B cell (primary cell): ENCODE measurements at regions of chr2 and their contacts with region 1.

Region 1: GRCh38 chr2:44167940-44168680 is 565 bp upstream of the PPM1B start:
- DNase-seq: peak; percentile 99
- ATAC-seq: peak; percentile 77
- H3K4me3 ChIP-seq: peak overlapping the region; percentile 68 to 96 (median 87)
- H3K4me3 Mint-ChIP-seq: peak overlapping the region; percentile 96
- H3K27ac ChIP-seq: peak overlapping the region; percentile 98 to 100
- H3K27ac Mint-ChIP-seq: peak overlapping the region; percentile 96
- H3K4me1 ChIP-seq: peaks cover 25 to 29% of the 10 kb centered on the region in 2 donors
- H3K4me1 Mint-ChIP-seq: peaks cover 26% of the 10 kb centered on the region
- H3K27me3 ChIP-seq: no peaks in the 10 kb centered on the region
- H3K27me3 Mint-ChIP-seq: no peaks in the 10 kb centered on the region
- CTCF ChIP-seq: no peak

Region 2: DNA sequence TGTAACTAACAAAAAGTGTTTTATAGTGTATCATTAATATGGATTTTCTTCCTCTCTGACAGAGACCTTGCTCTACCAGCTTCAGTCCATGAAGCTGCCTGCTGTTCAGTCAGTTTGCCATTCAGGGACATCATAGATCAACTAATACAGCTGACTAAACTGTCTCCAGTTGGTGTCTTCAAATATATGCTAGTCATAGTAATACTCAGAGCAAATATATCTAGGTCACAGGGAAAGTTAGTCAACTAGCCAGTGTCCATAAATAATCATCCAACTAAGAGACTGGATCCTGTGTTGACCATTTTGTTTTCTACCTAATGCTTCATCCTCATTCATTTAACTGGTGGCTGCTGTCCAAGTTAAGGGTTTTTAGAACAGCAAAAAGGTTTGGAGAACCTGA is 134.2 kb before region 1 on chr2:
- CTCF ChIA-PET with region 1: no interaction called
- POLR2A ChIA-PET with region 1: no interaction called
- intact Hi-C with region 1: no loop called
- DNase-seq: no peak
- ATAC-seq: no peak
- H3K4me3 ChIP-seq: no peak overlapping the region
- H3K4me3 Mint-ChIP-seq: no peak overlapping the region
- H3K27ac ChIP-seq: no peak overlapping the region
- H3K27ac Mint-ChIP-seq: no peak overlapping the region
- H3K4me1 ChIP-seq: no peaks in the 10 kb centered on the region
- H3K4me1 Mint-ChIP-seq: no peaks in the 10 kb centered on the region
- H3K27me3 ChIP-seq: peaks cover 0 to 4% (median 0%) of the 10 kb centered on the region in 4 experiments
- H3K27me3 Mint-ChIP-seq: peaks cover 34% of the 10 kb centered on the region
- CTCF ChIP-seq: no peak

Region 3: GRCh38 chr2:44044281-44044720 is 123.8 kb before region 1 on chr2:
- CTCF ChIA-PET with region 1: no interaction called
- POLR2A ChIA-PET with region 1: no interaction called
- intact Hi-C with region 1: loop called (anchors 1 kb)
- DNase-seq: peak; percentile 80
- ATAC-seq: peak; percentile 98
- H3K4me3 ChIP-seq: no peak overlapping the region
- H3K4me3 Mint-ChIP-seq: no peak overlapping the region
- H3K27ac ChIP-seq: no peak overlapping the region
- H3K27ac Mint-ChIP-seq: no peak overlapping the region
- H3K4me1 ChIP-seq: peaks cover 0 to 6% of the 10 kb centered on the region in 2 donors
- H3K4me1 Mint-ChIP-seq: peaks cover 7% of the 10 kb centered on the region
- H3K27me3 ChIP-seq: no peaks in the 10 kb centered on the region
- H3K27me3 Mint-ChIP-seq: peaks cover 3% of the 10 kb centered on the region
- CTCF ChIP-seq: peak; percentile 84

Region 4: GRCh38 chr2:44233450-44234128 is 65.5 kb after region 1 on chr2:
- CTCF ChIA-PET with region 1: no interaction called
- POLR2A ChIA-PET with region 1: no interaction called
- intact Hi-C with region 1: loop called (anchors 2 kb)
- DNase-seq: no peak
- ATAC-seq: no peak
- H3K4me3 ChIP-seq: no peak overlapping the region
- H3K4me3 Mint-ChIP-seq: no peak overlapping the region
- H3K27ac ChIP-seq: no peak overlapping the region
- H3K27ac Mint-ChIP-seq: no peak overlapping the region
- H3K4me1 ChIP-seq: peaks cover 16 to 18% of the 10 kb centered on the region in 2 donors
- H3K4me1 Mint-ChIP-seq: peaks cover 24% of the 10 kb centered on the region
- H3K27me3 ChIP-seq: no peaks in the 10 kb centered on the region
- H3K27me3 Mint-ChIP-seq: no peaks in the 10 kb centered on the region
- CTCF ChIP-seq: no peak

Region 5: GRCh38 chr2:44324971-44325426 is 156.9 kb after region 1 on chr2:
- CTCF ChIA-PET with region 1: no interaction called
- POLR2A ChIA-PET with region 1: no interaction called
- intact Hi-C with region 1: no loop called
- DNase-seq: no peak
- ATAC-seq: no peak
- H3K4me3 ChIP-seq: no peak overlapping the region
- H3K4me3 Mint-ChIP-seq: no peak overlapping the region
- H3K27ac ChIP-seq: no peak overlapping the region
- H3K27ac Mint-ChIP-seq: no peak overlapping the region
- H3K4me1 ChIP-seq: no peaks in the 10 kb centered on the region
- H3K4me1 Mint-ChIP-seq: no peaks in the 10 kb centered on the region
- H3K27me3 ChIP-seq: no peaks in the 10 kb centered on the region
- H3K27me3 Mint-ChIP-seq: no peaks in the 10 kb centered on the region
- CTCF ChIP-seq: no peak

Region 6: DNA sequence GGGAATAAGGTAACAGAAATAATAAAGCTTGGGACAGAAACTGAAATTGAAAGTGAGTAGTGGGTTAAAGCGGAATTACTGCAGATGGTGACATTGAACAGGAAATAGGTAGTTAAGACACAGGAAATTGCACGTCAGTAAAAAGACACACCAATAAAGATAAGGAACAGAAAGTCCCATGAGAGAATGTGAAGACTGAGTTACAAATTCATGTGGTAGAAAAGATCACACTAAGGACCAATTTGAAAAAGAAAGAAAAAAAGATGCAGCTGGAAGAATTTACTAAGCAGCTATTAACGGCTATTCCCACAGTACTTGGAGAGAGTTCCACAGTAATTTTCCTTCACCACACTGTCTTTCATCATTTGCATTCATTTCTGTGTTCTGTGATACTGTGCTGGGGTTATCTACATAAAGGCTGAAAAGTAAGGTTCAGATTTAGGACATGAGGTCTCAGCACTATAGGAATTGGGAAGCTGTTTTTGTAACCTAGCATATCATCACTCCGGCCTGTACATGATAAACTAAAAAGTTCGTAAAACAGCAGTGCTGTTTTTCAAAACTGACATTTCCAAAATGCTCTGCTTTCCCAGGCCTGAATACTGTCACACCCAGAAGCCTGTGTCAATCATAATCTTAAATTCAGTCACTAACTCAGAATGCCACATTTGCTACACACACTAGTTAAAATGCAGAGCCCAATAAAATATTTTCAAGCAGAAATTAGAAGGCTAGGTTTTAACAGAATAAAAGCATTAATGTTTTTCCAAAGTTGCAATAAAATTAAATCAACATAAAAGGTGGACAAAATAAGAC is 1400.1 kb after region 1 on chr2:
- CTCF ChIA-PET with region 1: no interaction called
- POLR2A ChIA-PET with region 1: no interaction called
- intact Hi-C with region 1: loop called (anchors 5 kb)
- DNase-seq: peak; percentile 88
- ATAC-seq: peak; percentile 97
- H3K4me3 ChIP-seq: peak overlapping the region; percentile 11 to 70 (median 50)
- H3K4me3 Mint-ChIP-seq: peak overlapping the region; percentile 85
- H3K27ac ChIP-seq: peak overlapping the region; percentile 75 to 91
- H3K27ac Mint-ChIP-seq: peak overlapping the region; percentile 86
- H3K4me1 ChIP-seq: peaks cover 10 to 12% of the 10 kb centered on the region in 2 donors
- H3K4me1 Mint-ChIP-seq: peaks cover 10% of the 10 kb centered on the region
- H3K27me3 ChIP-seq: no peaks in the 10 kb centered on the region
- H3K27me3 Mint-ChIP-seq: no peaks in the 10 kb centered on the region
- CTCF ChIP-seq: no peak

Region 7: GRCh38 chr2:45729753-45730512 is 1561.8 kb after region 1 on chr2:
- CTCF ChIA-PET with region 1: no interaction called
- POLR2A ChIA-PET with region 1: no interaction called
- intact Hi-C with region 1: loop called (anchors 10 kb)
- DNase-seq: peak; percentile 90
- ATAC-seq: peak; percentile 60
- H3K4me3 ChIP-seq: peak overlapping the region in 1 of 5 experiments; percentile 34
- H3K4me3 Mint-ChIP-seq: peak overlapping the region; percentile 79
- H3K27ac ChIP-seq: peak overlapping the region; percentile 91 to 98
- H3K27ac Mint-ChIP-seq: peak overlapping the region; percentile 97
- H3K4me1 ChIP-seq: peaks cover 78 to 87% of the 10 kb centered on the region in 2 donors
- H3K4me1 Mint-ChIP-seq: peaks cover 83% of the 10 kb centered on the region
- H3K27me3 ChIP-seq: no peaks in the 10 kb centered on the region
- H3K27me3 Mint-ChIP-seq: no peaks in the 10 kb centered on the region
- CTCF ChIP-seq: peak; percentile 73